Left cardiac atrium (tissue), 4 donors: ENCODE measurements at regions of chr14 and their contacts with region 1.

Region 1: DNA sequence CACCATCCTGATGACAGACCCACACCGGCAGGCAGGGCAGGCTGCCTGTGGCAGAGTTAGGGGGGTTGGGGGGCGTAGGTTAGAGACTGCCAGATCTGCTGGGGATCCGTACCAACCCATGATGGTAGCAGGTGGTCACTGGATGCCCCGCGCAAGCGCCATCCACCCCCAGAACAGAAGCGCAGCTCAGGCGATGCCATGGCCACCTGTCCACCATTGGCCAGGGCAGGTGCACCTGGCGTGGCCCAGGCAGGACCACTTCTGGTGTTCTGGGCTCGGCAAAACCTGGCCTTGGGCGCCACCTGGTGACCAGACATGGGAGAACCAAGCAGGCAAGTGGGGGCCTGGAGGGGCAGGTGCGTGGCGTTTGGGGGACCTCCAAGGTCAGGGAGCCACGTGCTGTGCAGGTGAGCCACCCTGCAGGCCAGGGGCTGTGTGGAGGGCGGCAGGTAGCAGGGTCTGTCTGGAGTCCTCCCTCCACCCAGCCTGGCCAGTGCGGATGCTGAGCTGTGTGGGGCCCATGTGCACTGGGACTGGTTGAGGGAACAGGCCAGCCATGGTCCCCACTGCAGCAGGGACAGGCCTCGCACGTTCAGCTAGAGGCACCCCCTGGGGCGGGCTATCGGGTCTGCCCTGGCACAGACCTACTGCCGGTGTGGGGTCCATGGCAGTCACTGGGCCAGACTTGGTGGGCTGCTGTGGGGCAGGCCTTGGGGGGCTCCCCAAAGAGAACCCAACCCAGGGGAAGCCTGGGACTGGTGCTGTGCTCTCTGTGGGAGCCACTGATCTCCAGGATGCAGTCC is 15.6 kb downstream of the BAG5 start:
- DNase-seq: peak; percentile 72
- ATAC-seq: peak in 1 of 2 donors; percentile 6

Region 2: GRCh38 chr14:103500148-103500990 is 46.5 kb before region 1 on chr14:
- intact Hi-C with region 1: loop called in 1 of 2 experiments (anchors 5 kb)
- DNase-seq: peak; percentile 94
- ATAC-seq: peak; percentile 91 to 92

Region 3: DNA sequence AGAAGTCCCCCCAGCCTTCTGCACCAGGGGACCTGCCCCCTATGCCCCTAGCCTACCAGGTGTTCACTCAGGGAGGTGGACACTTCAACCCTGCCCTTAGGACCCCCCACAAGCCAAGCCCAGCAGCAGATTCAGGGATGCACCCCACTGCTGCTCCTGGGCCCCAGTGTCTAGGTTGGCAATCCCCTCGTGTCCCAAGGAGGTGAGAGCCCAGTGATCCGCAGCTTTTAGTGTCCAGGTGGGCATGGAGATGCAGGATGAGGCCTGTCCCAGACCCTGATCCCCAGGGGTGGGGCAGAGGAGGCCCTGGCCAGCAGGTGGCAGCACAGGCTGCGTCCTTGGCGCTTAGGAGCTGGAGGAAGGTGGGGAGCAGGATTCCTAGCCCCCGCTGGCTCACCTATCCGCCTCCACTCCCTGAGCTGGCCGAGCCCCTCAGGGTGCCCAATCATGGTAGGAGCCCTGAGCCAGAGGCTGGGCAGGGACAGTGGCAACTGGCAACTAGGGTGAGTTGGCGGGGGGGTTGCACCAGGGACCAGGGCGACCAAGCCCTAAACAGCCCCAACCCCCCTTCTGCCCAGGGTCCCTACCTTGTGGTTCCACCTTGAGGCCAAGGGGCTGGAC is 28.3 kb before region 1 on chr14:
- intact Hi-C with region 1: loop called in 1 of 2 experiments (anchors 2 kb)
- DNase-seq: peak; percentile 65
- ATAC-seq: peak; percentile 34 to 41